ENCODE measurements at regions of chr7 and their contacts with region 1.

Region 1: DNA sequence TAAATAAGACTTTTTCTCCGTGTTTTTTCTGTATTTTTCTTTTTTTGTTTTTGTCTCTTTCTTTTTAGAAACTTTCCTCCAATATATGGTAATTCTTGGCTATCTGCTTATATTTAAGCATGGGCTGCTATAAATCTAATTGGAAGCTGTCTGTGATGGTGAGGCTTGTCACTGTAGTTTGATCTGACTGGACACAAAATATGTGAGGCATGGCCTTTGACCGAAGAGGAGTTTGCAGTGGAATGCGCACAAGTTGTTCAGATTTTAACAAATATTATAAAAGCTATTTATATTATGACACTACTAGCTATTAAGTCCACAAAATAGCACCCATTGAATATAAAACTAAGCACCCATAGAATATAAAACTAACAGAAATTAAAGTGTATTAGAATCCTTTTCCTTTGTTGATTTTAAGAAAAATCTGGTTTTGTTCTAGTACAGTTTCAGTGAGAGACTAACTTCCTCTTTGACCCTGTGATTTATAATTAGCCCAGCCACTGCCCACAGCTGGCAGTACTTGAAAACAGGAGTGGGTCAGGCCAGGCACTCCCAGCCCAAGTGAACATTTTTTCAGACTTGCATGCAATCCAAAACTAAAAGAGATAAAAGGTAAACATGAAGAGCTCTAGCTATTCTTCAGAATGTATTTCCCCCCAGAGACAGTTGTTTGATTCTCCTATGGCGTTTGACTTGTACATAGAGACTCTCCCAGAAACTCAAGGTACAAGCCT is 69.9 kb upstream of the FGL2 start:
- DNase-seq: no peak
- H3K4me3 Mint-ChIP-seq: no peak overlapping the region
- H3K27ac Mint-ChIP-seq: no peak overlapping the region
- H3K4me1 Mint-ChIP-seq: peaks cover 12% of the 10 kb centered on the region
- H3K27me3 Mint-ChIP-seq: peaks cover 4% of the 10 kb centered on the region

Region 2: GRCh38 chr7:77157446-77157845 is 112.1 kb before region 1 on chr7:
- CTCF ChIA-PET with region 1: no interaction called
- POLR2A ChIA-PET with region 1: no interaction called
- intact Hi-C with region 1: loop called (anchors 5 kb)
- DNase-seq: peak; percentile 9
- H3K4me3 Mint-ChIP-seq: no peak overlapping the region
- H3K27ac Mint-ChIP-seq: no peak overlapping the region
- H3K4me1 Mint-ChIP-seq: peaks cover 20% of the 10 kb centered on the region
- H3K27me3 Mint-ChIP-seq: no peaks in the 10 kb centered on the region

Region 3: DNA sequence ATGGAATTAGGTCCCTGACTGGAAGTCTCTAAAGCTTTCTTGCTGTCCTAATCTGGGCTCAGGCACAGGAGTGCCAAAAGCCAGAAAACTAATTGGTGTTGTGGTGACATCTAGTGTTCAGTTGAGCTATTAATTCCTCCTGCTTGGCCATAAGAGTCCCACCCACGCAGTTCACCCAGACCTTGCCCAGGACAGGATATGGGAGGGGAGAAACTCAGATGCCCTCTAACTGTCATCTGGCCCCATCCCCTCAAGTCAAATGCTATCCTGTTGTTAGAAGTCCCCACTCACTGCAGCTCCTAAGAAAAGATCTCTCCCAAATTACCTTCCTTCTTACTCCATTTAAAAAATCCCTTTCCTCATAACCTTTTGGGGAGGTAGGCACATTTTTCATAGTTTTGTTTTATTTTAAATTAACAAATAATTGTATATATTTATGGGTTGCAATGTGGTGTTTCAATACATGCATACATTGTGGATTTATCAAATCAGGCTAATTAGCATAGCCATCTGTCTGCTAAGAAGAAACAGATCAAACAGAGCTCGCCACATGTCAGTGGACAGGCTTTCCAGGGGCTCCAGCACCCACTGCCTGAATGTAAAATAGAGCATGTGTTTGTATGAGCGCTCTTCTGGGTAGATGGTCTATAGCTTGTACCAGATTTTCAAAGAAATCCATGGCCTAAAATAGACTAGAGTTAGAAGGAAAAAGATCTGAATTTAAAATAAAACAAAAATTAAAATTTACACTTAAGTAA is 62.6 kb after region 1 on chr7:
- CTCF ChIA-PET with region 1: interaction called, 8 read pairs
- POLR2A ChIA-PET with region 1: interaction called, 4 read pairs
- intact Hi-C with region 1: loop called (anchors 1 kb)
- DNase-seq: peak; percentile 69
- H3K4me3 Mint-ChIP-seq: no peak overlapping the region
- H3K27ac Mint-ChIP-seq: no peak overlapping the region
- H3K4me1 Mint-ChIP-seq: peaks cover 45% of the 10 kb centered on the region
- H3K27me3 Mint-ChIP-seq: no peaks in the 10 kb centered on the region

Region 4: GRCh38 chr7:77351539-77352004 is 82.0 kb after region 1 on chr7:
- CTCF ChIA-PET with region 1: no interaction called
- POLR2A ChIA-PET with region 1: no interaction called
- intact Hi-C with region 1: loop called (anchors 1 kb)
- DNase-seq: peak; percentile 57
- H3K4me3 Mint-ChIP-seq: peak overlapping the region; percentile 53
- H3K27ac Mint-ChIP-seq: peak overlapping the region; percentile 71
- H3K4me1 Mint-ChIP-seq: peaks cover 49% of the 10 kb centered on the region
- H3K27me3 Mint-ChIP-seq: no peaks in the 10 kb centered on the region

Region 5: GRCh38 chr7:77415823-77416622 is 146.5 kb after region 1 on chr7 and contains the start of gene GSAP:
- CTCF ChIA-PET with region 1: interaction called, 3 read pairs
- POLR2A ChIA-PET with region 1: no interaction called
- intact Hi-C with region 1: loop called (anchors 2 kb)
- DNase-seq: peak; percentile 61
- H3K4me3 Mint-ChIP-seq: peak within 1 kb of the TSS; percentile 59
- H3K27ac Mint-ChIP-seq: no peak within 1 kb of the TSS
- H3K4me1 Mint-ChIP-seq: peaks cover 32% of the 10 kb centered on the region
- H3K27me3 Mint-ChIP-seq: peaks cover 3% of the 10 kb centered on the region
- total RNA-seq, gene GSAP: 1.7 to 1.9 TPM

Region 6: GRCh38 chr7:77460057-77460486 is 190.5 kb after region 1 on chr7:
- CTCF ChIA-PET with region 1: no interaction called
- POLR2A ChIA-PET with region 1: no interaction called
- intact Hi-C with region 1: loop called (anchors 1 kb)
- DNase-seq: no peak
- H3K4me3 Mint-ChIP-seq: no peak overlapping the region
- H3K27ac Mint-ChIP-seq: no peak overlapping the region
- H3K4me1 Mint-ChIP-seq: peaks cover 14% of the 10 kb centered on the region
- H3K27me3 Mint-ChIP-seq: no peaks in the 10 kb centered on the region